WTC11 (cell line): ENCODE measurements at regions of chr5 and their contacts with region 1.

Region 1: GRCh38 chr5:113776832-113777525 is 263.5 kb downstream of the YTHDC2 start:
- DNase-seq: no peak
- ATAC-seq: no peak; the same call in 1 of the 2 replicates
- H3K4me3 Mint-ChIP-seq: peak overlapping the region; percentile 26
- H3K27ac Mint-ChIP-seq: peak overlapping the region; percentile 91
- H3K4me1 Mint-ChIP-seq: peaks cover 24% of the 10 kb centered on the region
- H3K27me3 Mint-ChIP-seq: no peaks in the 10 kb centered on the region
- CTCF ChIP-seq: no peak

Region 2: DNA sequence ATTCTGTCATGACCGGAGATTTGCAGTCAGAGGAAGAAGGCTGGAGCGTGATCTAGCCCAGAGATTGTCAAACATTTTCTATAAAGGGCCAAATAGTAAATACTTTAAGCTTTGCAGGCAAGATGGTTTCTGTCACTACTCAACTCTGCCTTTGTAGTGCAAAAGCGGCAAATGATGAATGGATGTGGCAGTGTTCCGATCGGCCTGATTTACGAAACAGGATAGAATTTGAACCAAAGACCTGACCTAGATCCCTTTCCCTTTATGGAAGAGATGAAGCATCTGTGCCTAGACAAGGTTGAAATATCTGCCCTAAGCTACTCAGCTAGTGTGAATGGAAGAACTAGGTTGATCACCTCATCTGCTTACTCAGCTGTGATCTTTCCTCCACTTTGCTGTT is 54.0 kb before region 1 on chr5:
- CTCF ChIA-PET with region 1: no interaction called
- POLR2A ChIA-PET with region 1: no interaction called
- DNase-seq: no peak
- ATAC-seq: no peak
- H3K4me3 Mint-ChIP-seq: no peak overlapping the region
- H3K27ac Mint-ChIP-seq: no peak overlapping the region
- H3K4me1 Mint-ChIP-seq: no peaks in the 10 kb centered on the region
- H3K27me3 Mint-ChIP-seq: no peaks in the 10 kb centered on the region
- CTCF ChIP-seq: no peak

Region 3: DNA sequence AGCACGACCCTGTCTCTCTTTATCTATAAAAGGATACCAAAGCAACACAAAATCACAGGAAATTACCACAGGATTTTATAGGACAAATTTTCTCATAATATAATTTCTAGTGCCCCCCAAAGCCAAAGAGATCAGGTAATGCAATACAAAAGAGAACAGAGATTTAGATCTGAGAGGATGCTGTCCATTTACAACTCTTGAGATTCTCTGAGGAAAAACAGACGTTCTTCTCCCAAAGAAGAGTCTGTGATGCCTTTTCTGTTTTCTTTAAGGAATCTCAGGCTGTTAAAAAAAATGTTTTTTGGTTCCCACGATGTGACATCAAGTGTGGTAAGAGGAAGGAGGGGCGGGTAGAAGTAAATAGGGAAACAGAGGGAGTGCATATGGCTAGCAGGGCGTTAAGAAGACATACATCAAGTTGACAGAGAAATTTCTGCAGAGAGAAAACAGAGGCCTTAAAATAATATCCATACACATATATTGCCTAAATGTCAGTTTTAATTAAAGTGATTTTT is 11.2 kb after region 1 on chr5:
- CTCF ChIA-PET with region 1: interaction called, 16 read pairs
- POLR2A ChIA-PET with region 1: no interaction called
- DNase-seq: no peak
- ATAC-seq: no peak
- H3K4me3 Mint-ChIP-seq: no peak overlapping the region
- H3K27ac Mint-ChIP-seq: no peak overlapping the region
- H3K4me1 Mint-ChIP-seq: no peaks in the 10 kb centered on the region
- H3K27me3 Mint-ChIP-seq: no peaks in the 10 kb centered on the region
- CTCF ChIP-seq: no peak